Naive thymus-derived CD4-positive, alpha-beta T cell (primary cell): ENCODE measurements at regions of chr2 and their contacts with region 1.

Region 1: DNA sequence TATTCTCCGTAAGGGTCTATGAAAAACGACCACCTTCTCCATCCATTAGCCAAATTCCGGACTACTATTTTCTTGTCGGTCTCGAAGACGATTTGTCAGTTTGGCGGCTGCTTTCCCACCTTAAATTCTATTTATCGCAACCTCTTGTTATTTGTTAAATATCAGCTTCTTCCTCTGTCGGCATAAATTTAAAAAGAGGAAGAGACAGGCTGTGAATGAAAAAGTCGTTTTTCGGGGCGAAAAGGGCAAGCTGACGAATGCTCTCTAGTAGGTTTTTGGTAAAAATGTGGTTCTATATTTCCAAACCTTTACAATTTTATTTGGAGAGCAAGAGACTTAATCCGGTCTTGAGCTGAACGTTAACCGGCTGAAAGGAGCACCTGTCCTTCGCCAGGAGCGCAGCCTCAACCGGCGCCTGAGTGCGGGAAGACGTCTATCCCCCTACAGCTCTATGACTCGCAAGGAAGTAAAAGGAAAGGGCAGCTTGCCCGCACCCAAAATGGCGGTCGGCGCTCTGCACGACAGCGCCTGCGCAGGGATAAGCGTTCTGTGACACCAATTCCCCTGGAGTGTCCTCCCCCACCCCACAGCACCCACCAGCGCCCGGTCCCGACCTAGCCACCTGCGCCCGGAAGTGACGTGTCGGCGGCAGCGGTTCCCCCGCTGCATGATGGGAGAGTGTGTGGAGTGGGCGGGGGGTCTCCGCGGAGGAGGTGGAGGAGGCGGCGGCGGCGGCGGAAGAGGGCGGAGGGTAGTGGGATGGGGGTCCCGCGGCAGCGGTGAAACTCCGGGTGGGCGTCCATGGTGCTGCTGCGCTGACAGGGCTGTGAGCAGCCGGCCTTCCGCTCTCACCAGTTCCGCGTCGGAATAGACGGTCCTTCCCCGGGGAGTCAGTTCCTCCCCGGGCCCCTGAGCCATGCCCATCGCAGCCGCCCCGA is at the start of gene AFTPH:
- DNase-seq: peak; percentile 96 to 100 (median 99)
- ATAC-seq: peak; percentile 98
- H3K4me3 ChIP-seq: peak within 1 kb of the TSS; percentile 99
- H3K4me3 Mint-ChIP-seq: peak within 1 kb of the TSS; percentile 94 to 100 (median 99)
- H3K27ac ChIP-seq: peak within 1 kb of the TSS; percentile 85
- H3K27ac Mint-ChIP-seq: peak within 1 kb of the TSS; percentile 93 to 99 (median 99)
- H3K4me1 ChIP-seq: peaks cover 22 to 25% of the 10 kb centered on the region in 2 donors
- H3K4me1 Mint-ChIP-seq: peaks cover 10 to 51% (median 43%) of the 10 kb centered on the region in 7 donors
- H3K27me3 ChIP-seq: no peaks in the 10 kb centered on the region
- H3K27me3 Mint-ChIP-seq: peaks cover 0 to 12% (median 0%) of the 10 kb centered on the region in 5 donors
- total RNA-seq, gene AFTPH: 25.2 to 46.2 (median 37.0) TPM

Region 2: DNA sequence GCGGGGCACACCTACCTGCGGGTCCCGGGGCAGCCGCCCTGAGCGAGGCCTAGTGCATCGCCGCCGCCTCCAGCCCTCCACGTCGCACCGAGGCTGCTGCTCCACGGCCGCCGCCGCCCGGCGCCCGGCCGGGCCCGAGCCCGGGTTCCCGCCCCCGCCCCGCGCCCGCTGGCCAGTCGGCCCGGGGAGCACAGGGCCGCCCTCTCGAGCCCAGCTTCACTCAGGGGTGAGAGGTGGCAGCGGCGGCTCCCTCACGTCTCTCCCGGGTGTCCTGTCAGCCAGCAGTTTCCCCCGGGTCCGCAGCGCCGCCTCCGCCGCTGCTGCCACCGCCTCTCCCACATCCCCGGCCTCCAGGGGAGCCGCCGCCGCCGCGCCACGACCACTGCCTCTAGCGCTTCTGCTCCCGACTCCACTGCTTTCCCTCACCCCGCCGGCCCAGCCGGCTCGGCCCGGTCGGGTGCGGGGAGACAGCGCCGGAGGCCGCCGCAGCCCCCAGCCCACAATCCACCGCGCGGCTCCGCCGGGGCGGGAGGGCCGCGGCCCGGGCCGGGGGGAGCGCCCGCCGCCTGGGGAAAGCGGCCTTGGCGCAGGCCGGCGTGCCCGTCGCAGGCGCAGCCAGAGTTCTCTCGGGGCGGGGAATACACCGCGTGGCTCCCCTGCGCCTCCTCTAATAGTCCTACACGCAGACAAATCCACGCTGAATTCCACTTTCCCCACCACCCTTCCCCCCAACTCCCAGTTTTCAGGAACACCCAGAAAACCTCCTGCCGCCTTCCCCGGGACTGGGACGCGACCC is 504.8 kb before region 1 on chr2 and contains the start of gene VPS54:
- CTCF ChIA-PET with region 1: no interaction called
- POLR2A ChIA-PET with region 1: interaction called, 3 read pairs
- intact Hi-C with region 1: loop called in 1 of 2 experiments (anchors 1 kb)
- DNase-seq: peak; percentile 42 to 76 (median 65)
- ATAC-seq: peak; percentile 87
- H3K4me3 ChIP-seq: peak within 1 kb of the TSS; percentile 86
- H3K4me3 Mint-ChIP-seq: peak within 1 kb of the TSS; percentile 94 to 100 (median 98)
- H3K27ac ChIP-seq: peak within 1 kb of the TSS; percentile 79
- H3K27ac Mint-ChIP-seq: peak within 1 kb of the TSS; percentile 95 to 100 (median 97)
- H3K4me1 ChIP-seq: peaks cover 22 to 31% of the 10 kb centered on the region in 2 donors
- H3K4me1 Mint-ChIP-seq: peaks cover 20 to 60% (median 48%) of the 10 kb centered on the region in 7 donors
- H3K27me3 ChIP-seq: no peaks in the 10 kb centered on the region
- H3K27me3 Mint-ChIP-seq: no peaks in the 10 kb centered on the region
- total RNA-seq, gene VPS54: 13.2 to 20.8 (median 15.6) TPM

Region 3: DNA sequence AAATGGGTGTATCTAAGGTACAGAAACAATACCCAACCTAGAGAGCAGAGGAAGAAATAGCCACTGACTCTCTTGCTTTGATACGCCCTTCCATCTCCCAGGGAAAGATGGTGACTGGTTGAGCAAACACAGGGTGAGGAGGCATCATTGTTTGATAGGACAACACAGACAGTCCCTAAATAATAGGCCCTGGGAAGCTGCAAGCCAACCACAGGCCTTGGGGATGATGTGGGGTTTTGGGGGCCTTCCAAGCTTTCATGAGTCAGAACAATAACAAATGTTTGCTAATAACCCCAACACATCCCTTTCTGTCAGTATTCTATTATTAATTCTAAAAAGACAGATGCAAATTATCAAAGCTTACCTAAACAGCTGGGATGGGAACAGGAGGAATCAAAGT is 60.2 kb before region 1 on chr2:
- CTCF ChIA-PET with region 1: no interaction called
- POLR2A ChIA-PET with region 1: no interaction called
- intact Hi-C with region 1: no loop called
- DNase-seq: no peak
- ATAC-seq: no peak
- H3K4me3 ChIP-seq: no peak overlapping the region
- H3K4me3 Mint-ChIP-seq: no peak overlapping the region
- H3K27ac ChIP-seq: no peak overlapping the region
- H3K27ac Mint-ChIP-seq: no peak overlapping the region
- H3K4me1 ChIP-seq: no peaks in the 10 kb centered on the region
- H3K4me1 Mint-ChIP-seq: no peaks in the 10 kb centered on the region
- H3K27me3 ChIP-seq: no peaks in the 10 kb centered on the region
- H3K27me3 Mint-ChIP-seq: peaks cover 0 to 19% (median 0%) of the 10 kb centered on the region in 5 donors

Region 4: DNA sequence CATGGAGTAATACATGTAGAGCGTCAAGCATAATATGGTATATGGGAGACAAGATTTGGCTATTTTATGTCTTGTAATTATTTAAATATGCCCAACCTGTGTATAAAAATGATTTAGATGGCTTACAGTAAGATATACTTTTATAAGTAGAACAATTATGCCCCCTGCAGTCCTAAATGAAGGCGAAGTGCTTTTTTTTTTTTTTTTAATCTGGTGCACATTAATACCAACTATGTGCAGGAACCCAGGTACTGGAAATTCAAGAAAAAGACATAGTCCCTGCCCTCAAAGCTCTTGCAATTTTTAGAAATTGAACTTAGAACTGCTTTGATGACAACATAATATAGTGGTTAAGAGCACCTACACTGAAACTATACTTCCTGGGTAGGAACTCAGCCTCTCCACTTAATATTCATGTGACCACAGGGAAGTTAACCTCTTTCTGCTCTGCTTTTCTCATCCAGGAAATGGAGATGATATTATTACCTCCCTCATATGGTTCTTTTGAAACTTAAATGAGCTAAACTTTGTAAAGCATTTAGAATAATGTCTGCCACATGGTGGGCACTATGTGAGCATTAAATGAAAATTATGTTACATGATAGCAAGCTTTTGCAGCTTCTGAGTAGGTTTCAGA is 38.3 kb after region 1 on chr2:
- CTCF ChIA-PET with region 1: interaction called, 49 read pairs
- POLR2A ChIA-PET with region 1: interaction called, 36 read pairs
- intact Hi-C with region 1: loop called (anchors 1 kb)
- DNase-seq: peak in 7 of 9 donors; percentile 10 to 63 (median 44)
- ATAC-seq: peak; percentile 79
- H3K4me3 ChIP-seq: no peak overlapping the region
- H3K4me3 Mint-ChIP-seq: no peak overlapping the region
- H3K27ac ChIP-seq: no peak overlapping the region
- H3K27ac Mint-ChIP-seq: peak overlapping the region in 1 of 9 donors; percentile 1
- H3K4me1 ChIP-seq: peaks cover 0 to 4% of the 10 kb centered on the region in 2 donors
- H3K4me1 Mint-ChIP-seq: peaks cover 26 to 49% (median 38%) of the 10 kb centered on the region in 7 donors
- H3K27me3 ChIP-seq: no peaks in the 10 kb centered on the region
- H3K27me3 Mint-ChIP-seq: no peaks in the 10 kb centered on the region

Region 5: GRCh38 chr2:64653349-64654062 is 129.6 kb after region 1 on chr2 and contains the start of gene SERTAD2:
- CTCF ChIA-PET with region 1: interaction called, 19 read pairs
- POLR2A ChIA-PET with region 1: interaction called, 14 read pairs
- intact Hi-C with region 1: loop called (anchors 1 to 2 kb)
- DNase-seq: peak; percentile 80 to 89 (median 86)
- ATAC-seq: peak; percentile 93
- H3K4me3 ChIP-seq: peak within 1 kb of the TSS; percentile 66
- H3K4me3 Mint-ChIP-seq: peak within 1 kb of the TSS; percentile 84 to 99 (median 96)
- H3K27ac ChIP-seq: peak within 1 kb of the TSS; percentile 90
- H3K27ac Mint-ChIP-seq: peak within 1 kb of the TSS; percentile 81 to 98 (median 94)
- H3K4me1 ChIP-seq: peaks cover 8 to 45% of the 10 kb centered on the region in 2 donors
- H3K4me1 Mint-ChIP-seq: peaks cover 44 to 84% (median 80%) of the 10 kb centered on the region in 7 donors
- H3K27me3 ChIP-seq: no peaks in the 10 kb centered on the region
- H3K27me3 Mint-ChIP-seq: no peaks in the 10 kb centered on the region
- total RNA-seq, gene SERTAD2: 34.3 to 43.8 (median 40.1) TPM

Region 6: DNA sequence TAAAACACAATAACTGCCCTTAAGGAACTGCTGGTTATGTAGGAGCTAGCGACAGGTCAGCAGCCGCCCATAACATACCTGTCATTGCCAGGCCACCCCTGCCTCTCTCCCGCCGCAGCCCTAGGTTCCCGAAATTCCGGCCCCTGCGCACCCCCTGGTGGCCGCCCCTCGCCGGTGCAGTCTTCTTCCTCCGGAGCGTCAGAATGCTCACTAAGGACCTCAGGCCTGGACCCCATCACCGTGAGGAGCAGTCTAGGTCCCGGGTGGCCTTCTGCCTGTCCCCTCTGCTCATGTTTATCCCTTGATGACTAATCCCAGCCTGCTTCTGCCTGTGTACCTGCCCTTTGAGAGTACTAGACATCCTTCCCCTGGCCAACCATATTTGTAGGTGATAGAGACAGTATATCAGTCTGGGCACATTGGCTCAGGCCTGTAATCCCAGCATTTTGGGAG is 349.6 kb after region 1 on chr2:
- CTCF ChIA-PET with region 1: interaction called, 18 read pairs
- POLR2A ChIA-PET with region 1: no interaction called
- intact Hi-C with region 1: loop called (anchors 1 kb)
- DNase-seq: peak; percentile 51 to 87 (median 71)
- ATAC-seq: peak; percentile 93
- H3K4me3 ChIP-seq: no peak overlapping the region
- H3K4me3 Mint-ChIP-seq: peak overlapping the region in 6 of 10 donors; percentile 25 to 64 (median 46)
- H3K27ac ChIP-seq: no peak overlapping the region
- H3K27ac Mint-ChIP-seq: peak overlapping the region in 2 of 9 donors; percentile 46 to 63
- H3K4me1 ChIP-seq: peaks cover 0 to 3% of the 10 kb centered on the region in 2 donors
- H3K4me1 Mint-ChIP-seq: peaks cover 0 to 7% (median 7%) of the 10 kb centered on the region in 7 donors
- H3K27me3 ChIP-seq: no peaks in the 10 kb centered on the region
- H3K27me3 Mint-ChIP-seq: peaks cover 0 to 24% (median 4%) of the 10 kb centered on the region in 5 donors

Region 7: DNA sequence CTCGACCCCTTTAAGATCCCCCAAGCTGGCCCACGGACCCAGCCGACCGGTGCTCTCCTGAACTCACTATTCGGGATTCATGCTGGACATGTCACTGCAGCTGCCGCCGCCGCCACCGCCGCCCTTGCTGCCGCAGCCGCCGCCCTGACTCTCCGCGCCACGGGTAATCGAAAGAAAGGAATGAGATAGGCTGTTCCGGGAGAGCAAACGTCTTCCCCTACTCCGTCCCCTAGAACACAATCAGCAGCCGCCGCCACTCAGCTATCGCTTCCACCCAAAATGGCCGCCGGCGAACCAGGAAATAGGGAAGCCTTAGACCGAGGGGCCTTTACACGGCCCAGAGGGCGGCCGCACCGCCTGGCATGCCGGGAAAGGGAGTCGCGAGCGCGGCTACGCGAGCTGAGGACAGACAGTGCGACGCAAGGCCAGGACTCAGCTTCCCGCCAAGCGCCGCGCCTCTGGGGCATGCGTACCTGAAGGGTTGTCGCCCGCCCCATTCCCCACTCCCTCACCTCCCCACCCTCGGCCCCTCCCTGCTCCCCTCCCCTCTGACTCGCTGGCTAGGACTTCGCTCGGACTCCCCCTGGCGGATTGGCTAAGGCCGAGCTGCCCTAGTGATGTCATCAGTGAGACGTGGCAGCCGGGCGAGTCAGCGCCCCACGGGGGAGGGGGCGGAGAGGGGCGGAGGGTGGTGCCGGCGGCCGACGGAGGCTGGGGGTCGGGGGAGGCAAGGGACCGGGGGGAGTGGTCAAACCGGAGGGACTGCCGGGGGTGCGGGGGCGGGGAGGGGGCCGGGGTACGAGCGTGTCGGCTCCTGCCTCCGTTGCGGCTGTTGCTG is 606.1 kb after region 1 on chr2 and contains the start of gene RAB1A:
- CTCF ChIA-PET with region 1: no interaction called
- POLR2A ChIA-PET with region 1: interaction called, 3 read pairs
- intact Hi-C with region 1: loop called (anchors 1 kb)
- DNase-seq: peak; percentile 91 to 99 (median 98)
- ATAC-seq: peak; percentile 94
- H3K4me3 ChIP-seq: peak within 1 kb of the TSS; percentile 78
- H3K4me3 Mint-ChIP-seq: peak within 1 kb of the TSS; percentile 90 to 100 (median 98)
- H3K27ac ChIP-seq: peak within 1 kb of the TSS; percentile 98
- H3K27ac Mint-ChIP-seq: peak within 1 kb of the TSS; percentile 95 to 100 (median 99)
- H3K4me1 ChIP-seq: peaks cover 24 to 25% of the 10 kb centered on the region in 2 donors
- H3K4me1 Mint-ChIP-seq: peaks cover 24 to 47% (median 35%) of the 10 kb centered on the region in 7 donors
- H3K27me3 ChIP-seq: no peaks in the 10 kb centered on the region
- H3K27me3 Mint-ChIP-seq: peaks cover 0 to 17% (median 0%) of the 10 kb centered on the region in 5 donors
- total RNA-seq, gene RAB1A: 48.8 to 78.6 (median 65.8) TPM